ENCODE measurements at regions of chr11 and their contacts with region 1.

Region 1: DNA sequence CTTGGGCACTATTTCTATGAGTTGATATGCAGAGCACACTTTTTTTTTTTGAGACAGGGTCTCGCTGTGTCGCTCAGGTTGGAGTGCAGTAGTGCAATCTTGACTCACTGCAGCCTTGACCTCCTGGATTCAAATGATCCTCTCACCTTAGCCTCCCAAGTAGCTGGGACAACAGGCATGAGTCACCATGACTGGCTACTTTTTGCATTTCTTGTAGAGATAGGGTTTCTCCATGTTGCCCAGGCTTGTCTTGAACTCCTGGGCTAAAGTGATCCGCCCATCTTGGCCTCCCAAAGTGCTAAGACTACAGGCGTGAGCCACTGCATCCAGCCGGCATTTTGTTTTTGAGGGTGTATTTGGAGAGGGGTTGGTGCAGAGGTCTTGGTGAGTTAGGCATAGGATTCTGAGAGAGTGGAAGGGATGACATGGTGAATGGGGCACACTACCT is 29.9 kb upstream of the MTCH2 start:
- DNase-seq: no peak
- ATAC-seq: no peak
- H3K4me3 ChIP-seq: no peak overlapping the region
- H3K4me3 Mint-ChIP-seq: no peak overlapping the region
- H3K27ac ChIP-seq: no peak overlapping the region
- H3K27ac Mint-ChIP-seq: no peak overlapping the region
- H3K4me1 ChIP-seq: no peaks in the 10 kb centered on the region
- H3K4me1 Mint-ChIP-seq: no peaks in the 10 kb centered on the region
- H3K27me3 ChIP-seq: no peaks in the 10 kb centered on the region
- H3K27me3 Mint-ChIP-seq: no peaks in the 10 kb centered on the region
- CTCF ChIP-seq: no peak

Region 2: GRCh38 chr11:46846510-46846830 is 825.8 kb before region 1 on chr11:
- CTCF ChIA-PET with region 1: no interaction called
- POLR2A ChIA-PET with region 1: no interaction called
- intact Hi-C with region 1: no loop called
- DNase-seq: no peak
- ATAC-seq: no peak
- H3K4me3 ChIP-seq: peak overlapping the region; percentile 12 to 89 (median 83)
- H3K4me3 Mint-ChIP-seq: peak overlapping the region; percentile 97
- H3K27ac ChIP-seq: no peak overlapping the region
- H3K27ac Mint-ChIP-seq: peak overlapping the region; percentile 97
- H3K4me1 ChIP-seq: peaks cover 12 to 15% of the 10 kb centered on the region in 2 donors
- H3K4me1 Mint-ChIP-seq: peaks cover 31% of the 10 kb centered on the region
- H3K27me3 ChIP-seq: no peaks in the 10 kb centered on the region
- H3K27me3 Mint-ChIP-seq: no peaks in the 10 kb centered on the region
- CTCF ChIP-seq: no peak

Region 3: GRCh38 chr11:47656260-47656885 is 15.9 kb before region 1 on chr11:
- CTCF ChIA-PET with region 1: no interaction called
- POLR2A ChIA-PET with region 1: interaction called, 14 read pairs
- intact Hi-C with region 1: no loop called
- DNase-seq: no peak
- ATAC-seq: no peak
- H3K4me3 ChIP-seq: no peak overlapping the region
- H3K4me3 Mint-ChIP-seq: no peak overlapping the region
- H3K27ac ChIP-seq: no peak overlapping the region
- H3K27ac Mint-ChIP-seq: no peak overlapping the region
- H3K4me1 ChIP-seq: no peaks in the 10 kb centered on the region
- H3K4me1 Mint-ChIP-seq: no peaks in the 10 kb centered on the region
- H3K27me3 ChIP-seq: no peaks in the 10 kb centered on the region
- H3K27me3 Mint-ChIP-seq: peaks cover 3% of the 10 kb centered on the region
- CTCF ChIP-seq: no peak